IMR-90 (cell line): ENCODE measurements at regions of chr14 and their contacts with region 1.

Region 1: DNA sequence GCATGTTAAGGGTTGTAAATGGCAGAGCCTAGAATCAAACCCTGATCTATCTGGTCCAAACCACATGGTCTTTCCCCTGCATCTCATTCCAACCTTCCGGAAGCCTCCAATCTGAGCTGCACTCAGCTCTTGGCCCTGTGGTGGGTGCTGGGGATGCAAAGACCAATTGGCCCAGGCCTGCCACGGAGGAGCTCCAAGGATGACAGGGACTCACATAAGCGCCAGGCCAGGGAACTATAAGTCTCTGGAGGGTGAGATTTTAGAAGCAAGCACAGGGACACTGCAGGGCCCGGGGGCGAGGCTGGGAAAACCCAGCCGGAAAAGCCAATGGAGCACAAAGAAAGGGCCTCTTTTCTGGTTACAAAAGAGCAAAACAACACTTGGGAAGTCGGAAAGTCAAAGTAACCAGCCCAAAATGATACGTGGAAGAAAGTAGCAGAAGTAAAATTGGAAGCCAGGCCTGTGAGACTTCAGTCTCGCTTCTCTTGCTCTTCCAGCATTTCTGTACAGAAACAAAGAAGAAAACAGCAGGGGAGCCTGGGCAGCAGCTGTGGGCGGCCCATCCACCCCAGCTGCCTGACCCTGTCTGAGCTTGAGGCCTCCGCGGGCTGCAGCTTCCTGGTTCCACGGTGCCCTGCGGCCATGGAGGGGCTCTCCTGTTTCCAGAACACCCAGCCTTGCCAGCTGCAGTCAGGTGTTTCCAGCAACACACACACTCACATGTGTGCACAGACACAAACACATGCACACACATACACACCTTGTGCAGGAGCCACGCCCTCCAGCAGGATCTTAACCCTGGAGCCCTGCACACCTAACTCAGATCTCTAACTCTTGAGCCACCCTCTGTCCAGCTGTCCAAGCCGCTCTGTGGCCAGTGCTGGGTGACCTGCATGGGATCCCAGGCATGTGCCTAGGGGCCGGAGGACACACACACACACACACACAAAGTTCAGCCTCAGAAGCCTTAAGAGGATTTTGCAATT is 178.2 kb downstream of the BCL11B start:
- DNase-seq: no peak
- ATAC-seq: no peak
- H3K4me3 ChIP-seq: no peak overlapping the region
- H3K27ac ChIP-seq: no peak overlapping the region
- H3K4me1 ChIP-seq: no peaks in the 10 kb centered on the region
- H3K27me3 ChIP-seq: no peaks in the 10 kb centered on the region
- CTCF ChIP-seq: no peak
- POLR2A ChIP-seq: no peak
- RAD21 ChIP-seq: no peak

Region 2: GRCh38 chr14:98312006-98312405 is 781.8 kb before region 1 on chr14:
- CTCF ChIA-PET with region 1: no interaction called
- POLR2A ChIA-PET with region 1: no interaction called
- dilution Hi-C with region 1: no loop called
- in situ Hi-C with region 1: no loop called
- intact Hi-C with region 1: loop called (anchors 10 kb)
- DNase-seq: no peak
- ATAC-seq: no peak
- H3K4me3 ChIP-seq: no peak overlapping the region
- H3K27ac ChIP-seq: no peak overlapping the region
- H3K4me1 ChIP-seq: no peaks in the 10 kb centered on the region
- H3K27me3 ChIP-seq: no peaks in the 10 kb centered on the region
- CTCF ChIP-seq: no peak
- POLR2A ChIP-seq: no peak
- RAD21 ChIP-seq: no peak

Region 3: GRCh38 chr14:99127651-99128167 is 33.9 kb after region 1 on chr14:
- CTCF ChIA-PET with region 1: no interaction called
- POLR2A ChIA-PET with region 1: no interaction called
- dilution Hi-C with region 1: no loop called
- in situ Hi-C with region 1: no loop called
- intact Hi-C with region 1: no loop called
- DNase-seq: no peak
- ATAC-seq: no peak
- H3K4me3 ChIP-seq: no peak overlapping the region
- H3K27ac ChIP-seq: no peak overlapping the region
- H3K4me1 ChIP-seq: no peaks in the 10 kb centered on the region
- H3K27me3 ChIP-seq: no peaks in the 10 kb centered on the region
- CTCF ChIP-seq: no peak
- POLR2A ChIP-seq: no peak
- RAD21 ChIP-seq: no peak